Mammary epithelial cell (primary cell): ENCODE measurements at regions of chr4 and their contacts with region 1.

Region 1: GRCh38 chr4:138576684-138577083 is 334.5 kb upstream of the SLC7A11 start:
- DNase-seq: peak; percentile 27
- H3K4me3 ChIP-seq: no peak overlapping the region
- H3K27ac ChIP-seq: no peak overlapping the region
- H3K4me1 ChIP-seq: no peaks in the 10 kb centered on the region
- H3K27me3 ChIP-seq: no peaks in the 10 kb centered on the region
- CTCF ChIP-seq: peak; percentile 62 to 68

Region 2: DNA sequence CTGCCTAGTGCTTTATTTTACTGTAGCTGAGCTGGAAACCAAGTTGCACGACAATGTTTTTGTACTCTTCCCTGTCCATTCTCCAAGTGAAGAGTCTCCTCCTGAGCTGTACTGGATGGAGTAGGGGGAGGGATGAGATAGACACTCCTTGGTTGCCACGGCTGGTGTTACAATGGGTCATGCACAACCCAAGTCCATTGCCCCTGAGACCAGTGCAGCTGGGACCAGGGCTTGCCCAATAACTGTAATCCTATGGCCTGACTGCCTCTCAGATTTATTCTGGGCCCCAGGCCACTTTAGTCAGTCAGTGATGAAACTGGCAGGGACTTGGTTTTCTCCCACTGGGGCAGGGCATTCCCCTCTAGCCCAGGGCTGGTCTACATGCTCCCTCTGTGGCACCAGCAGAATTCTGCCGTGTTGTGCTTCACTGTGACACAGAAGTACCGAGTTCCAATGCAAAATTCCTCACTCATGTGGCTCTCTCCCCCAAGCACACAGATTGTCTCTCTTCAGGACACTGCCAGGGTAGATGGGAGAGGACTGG is 841.1 kb before region 1 on chr4:
- CTCF ChIA-PET with region 1: no interaction called
- dilution Hi-C with region 1: no loop called
- in situ Hi-C with region 1: no loop called
- intact Hi-C with region 1: loop called (anchors 1 kb)
- DNase-seq: no peak
- H3K4me3 ChIP-seq: no peak overlapping the region
- H3K27ac ChIP-seq: no peak overlapping the region
- H3K4me1 ChIP-seq: no peaks in the 10 kb centered on the region
- H3K27me3 ChIP-seq: no peaks in the 10 kb centered on the region
- CTCF ChIP-seq: no peak

Region 3: GRCh38 chr4:138222046-138222445 is 354.6 kb before region 1 on chr4:
- CTCF ChIA-PET with region 1: no interaction called
- dilution Hi-C with region 1: no loop called
- in situ Hi-C with region 1: no loop called
- intact Hi-C with region 1: no loop called
- DNase-seq: no peak
- H3K4me3 ChIP-seq: no peak overlapping the region
- H3K27ac ChIP-seq: no peak overlapping the region
- H3K4me1 ChIP-seq: peaks cover 6% of the 10 kb centered on the region
- H3K27me3 ChIP-seq: no peaks in the 10 kb centered on the region
- CTCF ChIP-seq: no peak

Region 4: DNA sequence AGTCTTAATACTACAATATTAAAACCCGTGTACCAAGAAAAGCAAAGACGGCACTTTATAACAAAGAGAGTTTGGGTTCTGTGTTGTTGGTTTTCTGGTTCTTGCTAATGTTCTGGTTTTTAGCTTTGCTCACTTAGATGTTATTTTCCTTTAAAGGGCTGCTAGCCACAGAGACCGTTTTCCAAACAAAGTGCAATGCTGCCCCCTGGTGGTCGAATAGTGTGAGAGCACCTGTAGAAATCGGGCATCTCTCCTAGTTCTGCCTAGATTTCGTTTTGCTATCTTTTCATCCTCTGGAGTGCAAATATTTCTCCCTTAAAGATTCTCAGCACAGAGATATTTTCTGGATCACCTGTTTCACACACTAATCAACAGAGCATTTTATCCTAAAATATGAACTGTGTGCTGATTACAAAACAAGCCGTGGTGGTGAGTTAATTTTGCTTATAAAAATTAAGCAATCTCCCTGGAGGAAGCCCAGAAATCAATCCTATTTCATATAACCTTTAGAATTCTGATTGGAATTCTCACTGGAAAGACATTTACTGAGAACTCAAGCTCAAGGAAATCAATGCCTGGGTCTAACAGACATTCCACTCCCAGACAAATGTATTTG is 104.4 kb after region 1 on chr4:
- CTCF ChIA-PET with region 1: interaction called, 4 read pairs
- dilution Hi-C with region 1: no loop called
- in situ Hi-C with region 1: no loop called
- intact Hi-C with region 1: loop called (anchors 1 kb)
- DNase-seq: peak; percentile 49
- H3K4me3 ChIP-seq: no peak overlapping the region
- H3K27ac ChIP-seq: no peak overlapping the region
- H3K4me1 ChIP-seq: no peaks in the 10 kb centered on the region
- H3K27me3 ChIP-seq: no peaks in the 10 kb centered on the region
- CTCF ChIP-seq: peak; percentile 81 to 83

Region 5: DNA sequence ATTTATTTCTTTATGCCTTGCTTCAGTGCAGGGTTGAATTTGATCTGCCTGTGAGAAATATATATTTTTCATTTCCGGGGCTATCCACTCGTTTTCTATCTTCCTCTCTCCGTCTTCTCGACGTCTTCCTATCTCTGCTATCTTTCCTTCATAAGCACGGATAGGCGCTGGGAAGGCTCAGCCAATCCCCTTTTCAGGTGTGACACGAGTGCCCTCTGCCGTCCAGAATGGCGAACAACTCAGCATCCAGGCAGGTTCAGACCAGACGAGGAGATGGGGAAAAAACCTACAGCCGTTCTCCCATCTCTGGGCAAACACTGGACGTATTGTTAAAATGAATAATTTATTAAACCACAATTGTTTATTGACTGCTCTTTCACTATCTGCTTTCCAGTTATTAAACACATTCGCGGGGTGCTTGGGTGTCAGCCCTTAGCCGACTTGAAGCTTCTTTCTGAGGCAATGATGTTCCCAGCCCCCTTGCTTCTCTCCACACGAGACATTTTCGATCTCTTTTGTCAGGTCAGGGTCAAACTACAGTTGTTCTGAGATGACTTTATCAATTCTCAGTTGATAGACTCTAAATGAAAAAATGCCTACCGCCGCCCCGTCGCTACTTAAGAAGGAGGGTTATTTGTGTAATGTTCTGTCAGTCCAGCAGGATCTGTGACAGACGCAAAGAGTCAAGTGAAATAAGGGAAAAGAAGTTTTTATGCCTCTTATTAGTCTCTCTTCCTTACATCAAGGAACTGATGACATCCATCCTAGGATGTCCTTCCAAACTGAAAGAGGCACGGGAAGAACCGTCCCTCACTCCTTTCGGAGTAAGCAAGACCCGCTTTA is 342.6 kb after region 1 on chr4:
- CTCF ChIA-PET with region 1: no interaction called
- dilution Hi-C with region 1: loop called (anchors 25 kb)
- in situ Hi-C with region 1: no loop called
- intact Hi-C with region 1: loop called (anchors 1 kb)
- DNase-seq: peak; percentile 74
- H3K4me3 ChIP-seq: no peak overlapping the region
- H3K27ac ChIP-seq: no peak overlapping the region
- H3K4me1 ChIP-seq: no peaks in the 10 kb centered on the region
- H3K27me3 ChIP-seq: no peaks in the 10 kb centered on the region
- CTCF ChIP-seq: peak; percentile 87 to 92